ENCODE measurements at regions of chr14 and their contacts with region 1.

Region 1: DNA sequence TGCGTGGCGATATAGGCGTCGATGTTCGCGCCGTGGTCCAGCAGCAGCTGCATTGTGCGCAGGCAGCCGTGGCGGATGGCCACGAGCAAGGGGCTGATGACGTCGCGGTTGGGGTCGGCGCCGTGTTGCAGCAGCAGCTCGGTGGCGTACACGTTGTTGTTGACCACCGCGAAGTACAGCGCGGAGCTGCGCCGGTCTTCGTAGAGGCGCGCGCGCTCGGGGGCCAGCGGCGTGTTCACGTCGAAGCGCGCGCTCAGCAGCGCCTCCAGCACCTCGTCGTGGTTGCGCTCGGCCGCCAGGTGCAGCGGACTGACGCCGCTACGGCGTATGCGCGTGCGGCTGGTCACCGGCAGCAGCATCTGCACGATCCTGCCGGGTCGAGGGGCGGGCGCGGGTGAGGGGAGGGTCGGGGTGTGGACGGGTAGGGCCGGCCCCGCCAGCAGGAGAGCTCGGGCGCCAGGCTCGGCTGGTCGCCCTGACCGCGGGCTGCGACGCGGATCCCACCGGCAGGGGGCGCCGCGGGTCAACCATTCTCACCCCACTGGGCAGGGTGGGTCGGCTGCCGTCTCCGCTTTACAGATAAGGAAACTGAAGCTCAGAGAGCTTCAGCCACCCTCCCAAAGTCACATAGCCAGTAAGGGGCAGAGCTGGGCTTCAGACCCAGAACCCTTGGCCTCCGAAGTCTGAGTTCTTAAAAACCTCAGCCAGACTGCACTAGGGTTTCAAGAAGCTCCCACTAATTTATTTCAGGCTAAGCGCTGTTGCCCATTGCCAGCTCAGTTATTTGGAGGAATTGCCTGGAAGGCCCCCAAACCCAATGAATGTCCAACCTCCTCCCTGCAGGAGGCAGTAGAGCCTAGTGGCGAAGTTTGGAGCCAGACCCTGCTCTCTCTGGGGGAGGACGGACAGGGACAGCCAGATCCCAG is 12.4 kb downstream of the FAM181A start:
- DNase-seq: peak; percentile 39
- H3K4me3 ChIP-seq: peak overlapping the region in 1 of 2 donors; percentile 23
- H3K27ac ChIP-seq: no peak overlapping the region
- H3K4me1 ChIP-seq: no peaks in the 10 kb centered on the region
- H3K27me3 ChIP-seq: peaks cover 5% of the 10 kb centered on the region
- CTCF ChIP-seq: peak; percentile 72 to 90 (median 76)
- POLR2A ChIP-seq: no peak

Region 2: DNA sequence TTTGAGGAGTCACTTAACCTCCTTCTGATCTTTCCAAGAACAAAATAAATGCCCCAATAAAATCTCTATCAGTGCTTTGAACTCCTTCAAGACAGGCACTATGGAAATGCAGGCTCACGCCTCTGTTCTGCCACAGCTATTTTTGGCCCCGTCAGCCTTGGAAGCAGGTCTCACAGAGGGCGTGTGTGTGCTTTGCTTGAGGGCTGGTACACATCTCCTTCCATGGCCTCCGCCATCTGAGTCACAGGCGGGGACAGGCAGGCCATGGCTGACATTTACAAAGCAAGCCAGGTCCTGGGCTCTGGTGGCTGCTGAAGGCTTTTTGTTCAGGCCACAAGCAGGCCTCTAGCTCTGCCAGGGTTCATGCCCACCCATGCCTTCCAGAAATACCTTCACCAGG is 167.3 kb before region 1 on chr14:
- intact Hi-C with region 1: no loop called
- DNase-seq: no peak
- H3K4me3 ChIP-seq: no peak overlapping the region
- H3K27ac ChIP-seq: no peak overlapping the region
- H3K4me1 ChIP-seq: no peaks in the 10 kb centered on the region
- H3K27me3 ChIP-seq: no peaks in the 10 kb centered on the region
- CTCF ChIP-seq: no peak
- POLR2A ChIP-seq: no peak

Region 3: DNA sequence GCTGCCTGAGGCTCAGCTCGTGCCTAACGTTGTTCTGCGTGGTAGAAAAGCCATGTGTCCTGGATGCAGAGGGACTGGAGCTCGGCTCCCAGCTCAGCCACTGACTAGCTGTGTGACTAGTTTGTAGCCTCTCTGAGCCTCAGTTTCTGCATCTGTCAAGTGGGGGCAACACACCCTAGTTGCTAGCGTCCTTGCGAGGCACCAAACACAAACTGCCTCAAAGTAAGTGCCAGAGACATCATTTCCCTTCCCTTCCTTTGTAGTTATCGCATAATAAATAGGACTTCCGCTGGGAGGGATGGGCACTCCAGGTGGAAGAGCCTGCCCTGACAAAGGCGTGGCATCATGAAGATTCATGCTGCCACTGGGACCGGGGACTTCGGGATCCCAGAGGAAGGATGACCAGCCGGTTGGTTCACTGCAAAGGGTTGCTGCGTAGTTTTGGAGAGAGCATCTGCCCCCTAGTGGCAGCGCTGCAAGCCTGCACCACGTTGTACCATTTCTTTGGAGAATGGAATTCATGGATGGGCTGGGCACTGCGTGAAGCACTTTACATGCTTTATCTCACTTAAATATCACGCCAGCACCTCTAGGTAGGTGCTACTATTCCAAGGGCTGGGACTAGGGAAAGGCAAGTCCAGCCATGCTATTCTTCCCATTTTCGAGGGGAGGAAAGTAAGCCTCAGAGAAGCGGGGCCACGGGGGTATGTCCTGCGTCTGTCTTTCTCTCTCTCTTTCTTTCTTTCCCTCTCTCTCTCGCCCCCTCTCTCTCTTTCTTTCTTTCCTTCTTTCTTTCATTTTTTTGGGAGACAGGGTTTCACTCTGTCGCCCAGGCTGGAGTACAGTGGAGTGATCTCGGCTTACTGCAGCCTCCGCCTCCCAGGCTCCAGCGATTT is 62.2 kb after region 1 on chr14:
- intact Hi-C with region 1: loop called (anchors 1 kb)
- DNase-seq: peak; percentile 47
- H3K4me3 ChIP-seq: no peak overlapping the region
- H3K27ac ChIP-seq: no peak overlapping the region
- H3K4me1 ChIP-seq: no peaks in the 10 kb centered on the region
- H3K27me3 ChIP-seq: no peaks in the 10 kb centered on the region
- CTCF ChIP-seq: peak; percentile 88 to 93 (median 89)
- POLR2A ChIP-seq: no peak

Region 4: GRCh38 chr14:94036313-94037050 is 96.9 kb after region 1 on chr14:
- intact Hi-C with region 1: no loop called
- DNase-seq: peak; percentile 45
- H3K4me3 ChIP-seq: no peak overlapping the region
- H3K27ac ChIP-seq: no peak overlapping the region
- H3K4me1 ChIP-seq: no peaks in the 10 kb centered on the region
- H3K27me3 ChIP-seq: no peaks in the 10 kb centered on the region
- CTCF ChIP-seq: peak; percentile 43 to 79 (median 73)
- POLR2A ChIP-seq: no peak

Region 5: DNA sequence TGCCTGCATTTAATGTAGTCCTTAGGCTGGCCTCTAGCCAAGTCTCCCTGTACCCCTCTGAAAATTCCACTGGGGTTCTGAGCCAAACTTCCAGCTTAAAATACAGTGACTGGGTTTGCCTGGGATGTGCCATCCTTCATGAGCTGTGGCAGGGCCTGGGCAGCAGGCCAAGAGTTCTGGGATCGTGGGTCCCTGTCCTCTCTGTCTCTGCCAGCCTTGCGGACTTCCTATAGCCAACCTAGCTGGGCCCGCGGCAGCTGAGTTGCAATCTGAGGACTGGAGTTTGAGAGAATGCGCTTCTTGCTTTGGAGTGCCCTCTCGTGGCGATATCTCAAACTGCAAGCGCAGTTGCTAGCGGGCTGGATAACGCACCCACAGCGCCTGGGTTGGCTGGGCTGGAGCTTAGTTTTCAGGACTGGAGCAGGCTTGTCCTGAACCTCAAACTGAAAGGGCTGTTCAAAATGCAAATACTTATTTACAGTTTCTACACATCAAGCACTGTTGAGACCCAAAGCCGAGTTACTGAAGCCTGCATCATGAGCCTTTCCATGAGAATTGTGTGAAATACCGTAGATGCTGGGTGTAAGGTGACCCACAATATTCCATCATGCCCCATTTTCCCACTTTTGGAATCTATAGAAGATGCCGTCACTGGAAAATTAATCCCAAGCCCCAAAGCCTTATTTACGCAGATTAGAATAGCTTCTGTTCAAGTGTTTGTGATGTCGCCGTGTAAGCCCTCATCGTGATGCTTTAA is 197.2 kb after region 1 on chr14:
- intact Hi-C with region 1: loop called (anchors 10 kb)
- DNase-seq: peak; percentile 84
- H3K4me3 ChIP-seq: no peak overlapping the region
- H3K27ac ChIP-seq: no peak overlapping the region
- H3K4me1 ChIP-seq: no peaks in the 10 kb centered on the region
- H3K27me3 ChIP-seq: no peaks in the 10 kb centered on the region
- CTCF ChIP-seq: peak; percentile 83 to 93 (median 90)
- POLR2A ChIP-seq: no peak

Measured in prostate gland (tissue), 2 donors.